ENCODE measurements at regions of chr2 and their contacts with region 1.

Region 1: GRCh38 chr2:112108178-112108832 is 29.9 kb upstream of the FBLN7 start:
- DNase-seq: no peak
- ATAC-seq: no peak
- H3K4me3 ChIP-seq: no peak overlapping the region
- H3K4me3 Mint-ChIP-seq: no peak overlapping the region
- H3K27ac ChIP-seq: no peak overlapping the region
- H3K27ac Mint-ChIP-seq: no peak overlapping the region
- H3K4me1 ChIP-seq: no peaks in the 10 kb centered on the region
- H3K4me1 Mint-ChIP-seq: no peaks in the 10 kb centered on the region
- H3K27me3 ChIP-seq: no peaks in the 10 kb centered on the region
- H3K27me3 Mint-ChIP-seq: no peaks in the 10 kb centered on the region
- CTCF ChIP-seq: no peak

Region 2: GRCh38 chr2:112121682-112122254 is 13.5 kb after region 1 on chr2:
- CTCF ChIA-PET with region 1: no interaction called
- POLR2A ChIA-PET with region 1: no interaction called
- intact Hi-C with region 1: no loop called
- DNase-seq: peak in 11 of 14 experiments; percentile 20 to 76 (median 45)
- ATAC-seq: no peak
- H3K4me3 ChIP-seq: no peak overlapping the region
- H3K4me3 Mint-ChIP-seq: no peak overlapping the region
- H3K27ac ChIP-seq: no peak overlapping the region
- H3K27ac Mint-ChIP-seq: peak overlapping the region; percentile 35
- H3K4me1 ChIP-seq: no peaks in the 10 kb centered on the region
- H3K4me1 Mint-ChIP-seq: no peaks in the 10 kb centered on the region
- H3K27me3 ChIP-seq: no peaks in the 10 kb centered on the region
- H3K27me3 Mint-ChIP-seq: no peaks in the 10 kb centered on the region
- CTCF ChIP-seq: peak; percentile 80

Region 3: GRCh38 chr2:112229348-112229747 is 121.0 kb after region 1 on chr2:
- CTCF ChIA-PET with region 1: no interaction called
- POLR2A ChIA-PET with region 1: no interaction called
- intact Hi-C with region 1: no loop called
- DNase-seq: no peak
- ATAC-seq: no peak
- H3K4me3 ChIP-seq: no peak overlapping the region
- H3K4me3 Mint-ChIP-seq: no peak overlapping the region
- H3K27ac ChIP-seq: no peak overlapping the region
- H3K27ac Mint-ChIP-seq: no peak overlapping the region
- H3K4me1 ChIP-seq: no peaks in the 10 kb centered on the region
- H3K4me1 Mint-ChIP-seq: peaks cover 13% of the 10 kb centered on the region
- H3K27me3 ChIP-seq: no peaks in the 10 kb centered on the region
- H3K27me3 Mint-ChIP-seq: no peaks in the 10 kb centered on the region
- CTCF ChIP-seq: no peak

Region 4: DNA sequence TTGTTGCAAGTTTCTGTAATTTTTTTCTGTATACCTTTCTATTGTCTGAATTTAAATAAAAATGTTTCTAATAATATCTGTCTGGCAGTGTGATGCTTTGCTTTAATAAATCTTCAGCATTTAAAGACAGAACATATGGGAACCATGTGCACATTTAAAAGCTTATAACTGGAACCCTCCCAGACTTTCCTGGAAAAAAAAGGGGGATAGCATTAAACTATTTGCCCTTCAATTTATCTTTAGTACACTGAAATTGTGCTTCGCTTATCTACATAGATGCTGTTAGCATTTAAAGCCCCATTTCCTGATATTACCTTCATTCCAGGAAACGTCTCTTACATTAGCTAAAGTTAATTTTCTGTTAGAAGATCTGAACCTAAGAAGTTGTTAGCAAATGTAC is 231.7 kb after region 1 on chr2:
- CTCF ChIA-PET with region 1: no interaction called
- POLR2A ChIA-PET with region 1: no interaction called
- intact Hi-C with region 1: loop called in 1 of 2 experiments (anchors 10 kb)
- DNase-seq: no peak
- ATAC-seq: no peak
- H3K4me3 ChIP-seq: no peak overlapping the region
- H3K4me3 Mint-ChIP-seq: no peak overlapping the region
- H3K27ac ChIP-seq: no peak overlapping the region
- H3K27ac Mint-ChIP-seq: no peak overlapping the region
- H3K4me1 ChIP-seq: no peaks in the 10 kb centered on the region
- H3K4me1 Mint-ChIP-seq: no peaks in the 10 kb centered on the region
- H3K27me3 ChIP-seq: no peaks in the 10 kb centered on the region
- H3K27me3 Mint-ChIP-seq: no peaks in the 10 kb centered on the region
- CTCF ChIP-seq: no peak

Measured in CD4-positive, alpha-beta T cell (primary cell).